ENCODE measurements at regions of chr2 and their contacts with region 1.

Region 1: GRCh38 chr2:39728941-39729351 is 50.1 kb downstream of the THUMPD2 start:
- DNase-seq: no peak
- ATAC-seq: peak; percentile 86
- H3K4me3 ChIP-seq: no peak overlapping the region
- H3K27ac ChIP-seq: no peak overlapping the region
- H3K4me1 ChIP-seq: no peaks in the 10 kb centered on the region
- H3K27me3 ChIP-seq: no peaks in the 10 kb centered on the region
- CTCF ChIP-seq: peak; percentile 60 to 76 (median 75)
- EP300 ChIP-seq: no peak
- POLR2A ChIP-seq: no peak
- RAD21 ChIP-seq: peak; percentile 59

Region 2: DNA sequence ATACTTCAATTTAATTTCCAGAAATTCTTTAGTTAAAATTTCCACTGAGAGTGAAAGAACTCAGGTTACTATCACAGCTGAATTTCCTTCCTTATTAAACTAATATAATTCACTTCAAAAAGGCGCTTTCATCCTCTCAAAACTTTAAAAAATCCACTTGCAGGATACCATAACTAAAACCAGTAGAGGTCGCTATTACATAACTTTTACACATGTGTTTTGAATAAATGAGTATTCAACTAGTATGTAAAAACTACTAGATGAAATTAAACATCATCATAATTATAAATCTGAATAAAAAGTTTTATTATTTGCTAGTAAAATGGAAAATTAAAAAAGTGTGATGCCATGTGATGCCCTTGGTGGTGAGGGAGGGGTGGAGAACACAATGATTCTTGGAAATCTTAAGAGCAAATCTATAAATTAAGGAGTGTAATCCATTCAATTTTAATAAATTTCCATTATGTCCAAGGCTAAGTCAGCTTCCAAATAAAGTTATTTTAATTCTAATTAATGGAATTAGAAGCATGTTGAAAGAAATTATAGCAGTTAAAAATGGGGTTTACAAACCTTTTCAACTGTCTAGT is 669.5 kb before region 1 on chr2:
- CTCF ChIA-PET with region 1: interaction called, 5 read pairs
- POLR2A ChIA-PET with region 1: no interaction called
- RAD21 ChIA-PET with region 1: interaction called, 4 read pairs
- SMC1A ChIA-PET with region 1: interaction called, 4 read pairs
- in situ Hi-C with region 1: loop called (anchors 25 kb)
- intact Hi-C with region 1: no loop called
- DNase-seq: no peak
- ATAC-seq: peak; percentile 73
- H3K4me3 ChIP-seq: no peak overlapping the region
- H3K27ac ChIP-seq: no peak overlapping the region
- H3K4me1 ChIP-seq: no peaks in the 10 kb centered on the region
- H3K27me3 ChIP-seq: no peaks in the 10 kb centered on the region
- CTCF ChIP-seq: peak; percentile 44 to 68 (median 54); a peak in 5 of 6 replicates
- EP300 ChIP-seq: no peak
- POLR2A ChIP-seq: no peak
- RAD21 ChIP-seq: peak; percentile 74

Region 3: GRCh38 chr2:39379643-39380524 is 349.1 kb before region 1 on chr2:
- CTCF ChIA-PET with region 1: interaction called, 145 read pairs
- POLR2A ChIA-PET with region 1: no interaction called
- RAD21 ChIA-PET with region 1: interaction called, 71 read pairs
- SMC1A ChIA-PET with region 1: interaction called, 63 read pairs
- in situ Hi-C with region 1: loop called (anchors 10 kb)
- intact Hi-C with region 1: loop called (anchors 1 kb)
- DNase-seq: peak; percentile 31
- ATAC-seq: peak; percentile 84
- H3K4me3 ChIP-seq: no peak overlapping the region
- H3K27ac ChIP-seq: no peak overlapping the region
- H3K4me1 ChIP-seq: no peaks in the 10 kb centered on the region; the same call in 1 of the 2 replicates
- H3K27me3 ChIP-seq: no peaks in the 10 kb centered on the region
- CTCF ChIP-seq: peak; percentile 46 to 66 (median 48); a peak in 4 of 6 replicates
- EP300 ChIP-seq: no peak
- POLR2A ChIP-seq: no peak
- RAD21 ChIP-seq: peak; percentile 66

Region 4: DNA sequence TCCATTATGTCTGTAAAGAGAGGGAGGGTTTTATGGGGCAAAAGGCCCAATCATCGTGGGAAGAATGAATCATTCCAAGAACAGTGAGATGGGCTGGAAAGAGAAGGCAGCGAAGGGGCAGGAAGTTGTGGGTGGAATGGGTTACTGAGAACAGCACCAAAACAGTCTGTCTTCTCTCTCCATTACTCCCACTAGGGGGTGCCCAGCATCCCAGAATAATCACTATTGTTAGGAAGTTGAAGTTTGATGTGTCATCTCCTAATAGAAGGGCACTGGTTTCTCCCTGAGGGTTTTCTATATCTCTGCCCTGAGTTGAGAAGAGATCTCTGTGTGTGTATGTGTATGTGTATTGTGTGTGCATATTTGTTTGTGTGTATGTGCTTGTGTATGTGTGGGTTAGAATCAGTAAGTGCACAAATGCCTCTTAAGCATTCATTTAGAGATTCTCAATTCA is 215.3 kb before region 1 on chr2:
- CTCF ChIA-PET with region 1: interaction called, 4 read pairs
- POLR2A ChIA-PET with region 1: no interaction called
- RAD21 ChIA-PET with region 1: interaction called, 4 read pairs
- SMC1A ChIA-PET with region 1: no interaction called
- in situ Hi-C with region 1: no loop called
- intact Hi-C with region 1: loop called (anchors 2 kb)
- DNase-seq: peak; percentile 51
- ATAC-seq: peak; percentile 64
- H3K4me3 ChIP-seq: no peak overlapping the region
- H3K27ac ChIP-seq: no peak overlapping the region
- H3K4me1 ChIP-seq: peaks cover 16% of the 10 kb centered on the region
- H3K27me3 ChIP-seq: no peaks in the 10 kb centered on the region; a peak in 1 of 4 replicates
- CTCF ChIP-seq: peak; percentile 35 to 49 (median 35); a peak in 4 of 6 replicates
- EP300 ChIP-seq: no peak
- POLR2A ChIP-seq: no peak
- RAD21 ChIP-seq: peak; percentile 53

Region 5: GRCh38 chr2:39558906-39559305 is 170.0 kb before region 1 on chr2:
- CTCF ChIA-PET with region 1: no interaction called
- POLR2A ChIA-PET with region 1: no interaction called
- RAD21 ChIA-PET with region 1: no interaction called
- SMC1A ChIA-PET with region 1: no interaction called
- in situ Hi-C with region 1: no loop called
- intact Hi-C with region 1: no loop called
- DNase-seq: no peak
- ATAC-seq: no peak
- H3K4me3 ChIP-seq: no peak overlapping the region
- H3K27ac ChIP-seq: no peak overlapping the region
- H3K4me1 ChIP-seq: no peaks in the 10 kb centered on the region
- H3K27me3 ChIP-seq: no peaks in the 10 kb centered on the region
- CTCF ChIP-seq: no peak
- EP300 ChIP-seq: no peak
- POLR2A ChIP-seq: no peak
- RAD21 ChIP-seq: no peak

Region 6: DNA sequence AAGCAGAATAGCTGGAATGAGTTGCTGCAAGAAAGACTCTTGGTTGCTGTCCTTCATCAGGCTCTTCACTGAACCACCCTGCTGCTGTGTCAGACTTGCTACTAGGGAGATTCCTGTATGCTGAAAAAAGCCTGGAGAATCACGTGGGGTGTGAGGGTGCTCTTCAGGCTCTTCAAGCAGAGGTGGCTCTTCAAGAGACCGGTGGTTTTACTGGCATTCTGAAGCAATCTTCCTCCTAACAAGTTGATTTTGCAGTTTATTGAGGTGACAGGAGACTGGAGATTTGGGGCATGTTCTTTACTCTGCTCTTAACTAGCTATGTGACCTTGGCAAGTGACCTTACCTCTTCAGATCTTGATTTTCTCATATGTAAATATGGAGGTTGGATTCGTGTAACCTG is 49.1 kb before region 1 on chr2:
- CTCF ChIA-PET with region 1: no interaction called
- POLR2A ChIA-PET with region 1: no interaction called
- RAD21 ChIA-PET with region 1: no interaction called
- SMC1A ChIA-PET with region 1: no interaction called
- in situ Hi-C with region 1: no loop called
- intact Hi-C with region 1: no loop called
- DNase-seq: no peak
- ATAC-seq: no peak
- H3K4me3 ChIP-seq: no peak overlapping the region
- H3K27ac ChIP-seq: no peak overlapping the region
- H3K4me1 ChIP-seq: no peaks in the 10 kb centered on the region
- H3K27me3 ChIP-seq: no peaks in the 10 kb centered on the region
- CTCF ChIP-seq: no peak
- EP300 ChIP-seq: no peak
- POLR2A ChIP-seq: no peak
- RAD21 ChIP-seq: no peak

Region 7: GRCh38 chr2:39715095-39715494 is 13.9 kb before region 1 on chr2:
- CTCF ChIA-PET with region 1: interaction called, 10 read pairs
- POLR2A ChIA-PET with region 1: no interaction called
- RAD21 ChIA-PET with region 1: no interaction called
- SMC1A ChIA-PET with region 1: interaction called, 4 read pairs
- in situ Hi-C with region 1: no loop called
- intact Hi-C with region 1: no loop called
- DNase-seq: no peak
- ATAC-seq: no peak
- H3K4me3 ChIP-seq: no peak overlapping the region
- H3K27ac ChIP-seq: no peak overlapping the region
- H3K4me1 ChIP-seq: no peaks in the 10 kb centered on the region
- H3K27me3 ChIP-seq: no peaks in the 10 kb centered on the region
- CTCF ChIP-seq: no peak
- EP300 ChIP-seq: no peak
- POLR2A ChIP-seq: no peak
- RAD21 ChIP-seq: no peak

Region 8: DNA sequence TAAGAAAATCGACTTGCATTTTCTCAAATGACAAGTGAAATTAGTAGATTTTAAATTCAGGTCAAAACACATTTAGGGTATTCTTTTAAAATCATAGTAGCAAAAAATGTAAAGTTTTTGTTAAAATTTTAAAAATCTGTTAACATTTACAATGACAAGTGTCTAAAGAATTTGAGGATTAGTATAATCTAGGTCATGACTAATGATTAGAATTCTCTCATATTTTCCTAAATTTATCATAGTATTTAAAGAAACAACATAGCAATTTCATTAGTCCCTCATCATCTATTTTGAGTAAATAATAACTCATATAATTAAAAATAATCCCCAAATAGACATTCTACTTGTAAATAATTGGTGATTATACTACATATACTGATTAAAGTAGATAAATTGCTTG is 26.5 kb after region 1 on chr2:
- CTCF ChIA-PET with region 1: interaction called, 23 read pairs
- POLR2A ChIA-PET with region 1: interaction called, 4 read pairs
- RAD21 ChIA-PET with region 1: interaction called, 4 read pairs
- SMC1A ChIA-PET with region 1: interaction called, 5 read pairs
- in situ Hi-C with region 1: no loop called
- intact Hi-C with region 1: no loop called
- DNase-seq: no peak
- ATAC-seq: no peak
- H3K4me3 ChIP-seq: no peak overlapping the region
- H3K27ac ChIP-seq: no peak overlapping the region
- H3K4me1 ChIP-seq: no peaks in the 10 kb centered on the region
- H3K27me3 ChIP-seq: no peaks in the 10 kb centered on the region
- CTCF ChIP-seq: no peak
- EP300 ChIP-seq: no peak
- POLR2A ChIP-seq: no peak
- RAD21 ChIP-seq: no peak

Region 9: DNA sequence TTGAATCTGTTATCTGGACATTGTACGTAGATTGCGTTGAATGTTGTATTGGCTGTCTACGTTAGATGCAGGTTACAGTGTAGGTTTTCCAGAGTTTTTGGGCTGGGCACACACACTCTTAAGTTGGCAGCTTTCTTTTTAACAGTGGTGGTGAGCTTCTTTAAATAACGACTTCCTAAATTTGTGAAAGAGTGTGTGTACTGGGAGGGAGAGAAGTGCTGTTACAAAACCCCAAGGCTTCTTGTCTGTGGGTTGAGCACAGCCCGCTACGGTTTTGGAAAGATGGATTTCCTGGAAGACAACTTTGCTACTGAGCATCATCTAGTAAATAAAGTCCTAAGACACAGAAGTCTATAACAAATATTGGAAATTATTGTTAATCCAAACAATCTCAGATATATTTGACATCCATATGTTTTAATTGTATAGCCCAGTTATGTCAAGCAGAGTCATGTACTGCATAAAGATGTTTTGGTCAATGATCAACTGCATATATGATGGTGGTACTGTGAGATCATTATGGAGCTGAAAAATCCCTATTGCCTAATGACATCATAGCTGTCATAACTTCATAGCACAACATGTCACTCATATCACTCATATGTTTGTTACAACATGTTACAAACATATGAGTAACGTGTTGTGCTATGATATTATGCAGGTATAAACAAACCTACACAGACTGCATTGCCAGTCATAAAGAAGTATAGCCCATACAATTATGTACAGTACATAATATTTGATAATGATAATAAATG is 58.0 kb after region 1 on chr2:
- CTCF ChIA-PET with region 1: no interaction called
- POLR2A ChIA-PET with region 1: no interaction called
- RAD21 ChIA-PET with region 1: no interaction called
- SMC1A ChIA-PET with region 1: no interaction called
- in situ Hi-C with region 1: no loop called
- intact Hi-C with region 1: no loop called
- DNase-seq: no peak
- ATAC-seq: no peak
- H3K4me3 ChIP-seq: no peak overlapping the region
- H3K27ac ChIP-seq: no peak overlapping the region
- H3K4me1 ChIP-seq: no peaks in the 10 kb centered on the region
- H3K27me3 ChIP-seq: no peaks in the 10 kb centered on the region
- CTCF ChIP-seq: no peak
- EP300 ChIP-seq: no peak
- POLR2A ChIP-seq: no peak
- RAD21 ChIP-seq: no peak

Measured in GM12878 (cell line).